BJ (cell line): ENCODE measurements at regions of chr17 and their contacts with region 1.

Region 1: GRCh38 chr17:49315551-49316257 is 46.3 kb downstream of the ZNF652 start:
- DNase-seq: peak; percentile 53
- H3K4me3 ChIP-seq: no peak overlapping the region
- H3K27me3 ChIP-seq: no peaks in the 10 kb centered on the region
- CTCF ChIP-seq: peak; percentile 80

Region 2: DNA sequence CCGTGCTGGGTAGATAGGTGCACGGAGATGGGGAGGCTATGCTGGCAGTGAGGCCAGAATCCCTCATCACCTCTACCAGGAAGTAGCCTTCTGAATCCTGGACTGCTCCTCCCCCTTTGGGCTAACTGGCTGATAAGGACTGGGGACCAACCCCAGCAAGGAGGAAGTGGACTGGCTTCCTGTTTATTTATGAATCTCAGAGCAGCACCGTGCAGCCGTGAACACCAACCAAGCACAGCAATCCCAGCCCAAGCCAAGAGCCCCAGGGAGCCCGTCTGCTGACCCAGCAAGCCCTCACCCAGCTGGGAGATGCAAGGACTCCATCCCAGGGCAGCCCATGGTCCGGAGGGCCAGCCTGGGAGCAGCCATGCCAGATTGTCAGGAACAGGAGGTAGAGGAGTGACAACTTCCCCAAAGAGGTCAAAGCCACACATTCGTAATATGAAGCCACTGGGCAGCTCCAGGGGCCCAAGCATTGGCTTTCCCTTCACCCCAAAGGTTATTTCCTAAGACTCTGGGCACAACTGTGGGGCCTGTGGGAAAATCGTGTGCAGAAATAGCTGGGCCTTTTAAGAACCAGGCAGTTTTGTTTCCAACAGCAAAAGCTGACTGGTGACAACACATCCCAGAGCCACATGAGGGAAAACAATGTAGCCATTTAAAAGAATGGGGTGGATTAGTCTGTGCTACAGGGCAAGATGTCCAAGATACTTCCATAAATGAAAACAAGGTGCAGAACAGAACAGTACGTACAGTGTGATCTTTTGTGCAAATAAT is 75.0 kb after region 1 on chr17:
- CTCF ChIA-PET with region 1: interaction called, 89 read pairs
- POLR2A ChIA-PET with region 1: no interaction called
- DNase-seq: no peak
- H3K4me3 ChIP-seq: no peak overlapping the region
- H3K27me3 ChIP-seq: no peaks in the 10 kb centered on the region
- CTCF ChIP-seq: no peak

Region 3: DNA sequence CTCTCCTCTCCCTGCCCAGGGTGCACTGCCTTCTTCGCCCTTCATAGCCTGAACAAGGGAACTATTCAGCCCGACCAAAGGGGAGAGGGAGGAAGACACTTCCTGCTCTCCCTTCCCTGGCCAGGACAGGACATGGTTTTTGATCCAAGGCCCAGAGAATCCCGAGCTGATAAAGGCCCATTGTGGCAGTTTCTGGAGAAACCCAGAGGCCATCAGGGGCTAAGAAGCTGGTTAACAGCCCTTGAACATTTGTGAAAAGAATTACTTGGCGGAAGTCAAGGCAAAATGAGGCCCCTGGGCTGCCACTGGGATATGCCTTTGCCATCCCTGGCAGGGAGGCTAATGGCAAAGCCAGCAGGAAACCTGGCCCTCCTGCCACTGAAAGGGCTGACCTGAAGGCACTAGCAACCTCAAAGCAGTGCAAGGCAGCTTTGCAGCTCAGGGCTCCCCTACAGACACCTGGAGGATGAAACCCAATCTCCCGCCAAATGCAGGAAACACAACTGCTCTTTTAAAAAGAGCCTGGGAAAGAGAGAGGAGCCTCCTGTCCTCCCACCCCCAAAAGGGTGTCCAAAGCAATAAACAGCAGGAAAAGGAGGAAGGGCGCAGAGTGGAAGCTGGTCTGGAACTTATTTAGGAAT is 86.4 kb after region 1 on chr17:
- CTCF ChIA-PET with region 1: interaction called, 89 read pairs
- POLR2A ChIA-PET with region 1: no interaction called
- DNase-seq: no peak
- H3K4me3 ChIP-seq: no peak overlapping the region
- H3K27me3 ChIP-seq: no peaks in the 10 kb centered on the region
- CTCF ChIP-seq: no peak